GM13977 (cell line): ENCODE measurements at regions of chr16 and their contacts with region 1.

Region 1: GRCh38 chr16:69396187-69397061 is 10.6 kb upstream of the TERF2 start:
- DNase-seq: peak; percentile 56
- CTCF ChIP-seq: peak; percentile 50

Region 2: GRCh38 chr16:69754469-69755310 is 358.3 kb after region 1 on chr16 and contains the start of gene NOB1:
- in situ Hi-C with region 1: loop called (anchors 10 kb)
- DNase-seq: peak; percentile 93
- CTCF ChIP-seq: peak; percentile 98